ENCODE measurements at regions of chr12 and their contacts with region 1.

Region 1: GRCh38 chr12:111599459-111600204 is 517 bp upstream of the ATXN2 start:
- DNase-seq: peak; percentile 92
- CTCF ChIP-seq: no peak

Region 2: GRCh38 chr12:111584959-111585358 is 14.7 kb before region 1 on chr12:
- CTCF ChIA-PET with region 1: interaction called, 10 read pairs
- POLR2A ChIA-PET with region 1: interaction called, 5 read pairs
- DNase-seq: no peak
- CTCF ChIP-seq: no peak

Measured in GM10248 (cell line).